Endothelial cell of umbilical vein (primary cell): ENCODE measurements at regions of chr9 and their contacts with region 1.

Region 1: DNA sequence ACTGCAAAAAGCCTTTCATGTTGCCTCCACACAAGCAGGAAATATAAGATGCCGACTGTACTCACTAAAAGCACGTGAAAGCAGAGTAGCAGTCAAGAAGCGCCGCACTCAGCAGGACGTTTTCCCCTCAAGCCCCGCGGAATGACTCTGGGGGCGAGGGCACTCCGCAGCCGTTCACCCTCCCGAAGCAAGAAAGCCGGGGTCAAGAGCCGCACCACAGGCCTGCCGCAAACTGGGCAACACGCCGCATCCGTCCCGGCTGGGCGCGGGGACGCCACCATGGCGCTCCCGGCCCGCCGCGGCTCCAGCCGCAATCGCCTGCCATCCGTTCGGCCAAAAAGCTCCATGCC is 364 bp downstream of the RPS6 start:
- DNase-seq: peak; percentile 69
- H3K4me3 ChIP-seq: peak overlapping the region; percentile 84 to 94 (median 93)
- H3K27ac ChIP-seq: peak overlapping the region; percentile 62
- H3K4me1 ChIP-seq: peaks cover 37% of the 10 kb centered on the region
- H3K27me3 ChIP-seq: no peaks in the 10 kb centered on the region
- CTCF ChIP-seq: no peak
- POLR2A ChIP-seq: no peak

Region 2: DNA sequence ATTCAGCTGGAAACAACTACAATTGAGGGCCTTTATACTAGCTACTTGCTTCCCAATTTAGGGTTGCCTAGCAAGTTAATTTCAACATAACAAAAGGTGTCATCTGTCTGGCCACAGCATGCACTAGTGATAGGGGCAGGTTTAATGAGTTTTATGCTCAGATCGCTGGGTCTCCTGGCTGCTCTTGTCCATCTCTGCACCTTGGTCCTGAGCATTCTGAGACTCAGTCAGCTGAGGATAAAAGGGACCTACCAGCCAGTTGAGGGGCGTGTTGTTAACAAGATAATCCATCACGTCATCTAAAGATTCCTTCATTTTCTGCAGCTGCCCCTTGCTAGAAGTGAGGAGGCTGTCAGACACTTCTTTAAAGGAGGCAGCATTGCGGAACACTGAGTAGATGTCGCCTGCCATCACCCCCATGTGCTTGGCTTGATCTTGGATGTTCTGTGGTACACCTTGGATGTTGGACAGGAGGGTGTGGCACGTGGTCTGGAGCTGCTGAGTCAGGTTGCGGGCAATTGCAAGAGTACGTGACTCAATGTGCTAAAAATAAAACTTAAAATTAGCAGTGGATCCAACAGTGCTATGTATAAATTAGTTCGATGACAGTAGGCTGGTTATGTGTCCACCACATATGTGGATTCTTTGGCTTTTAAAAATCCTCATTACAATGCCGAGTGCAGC is 263.4 kb before region 1 on chr9:
- CTCF ChIA-PET with region 1: no interaction called
- POLR2A ChIA-PET with region 1: no interaction called
- dilution Hi-C with region 1: no loop called
- intact Hi-C with region 1: loop called (anchors 5 kb)
- DNase-seq: no peak
- H3K4me3 ChIP-seq: no peak overlapping the region
- H3K27ac ChIP-seq: no peak overlapping the region
- H3K4me1 ChIP-seq: peaks cover 30% of the 10 kb centered on the region
- H3K27me3 ChIP-seq: no peaks in the 10 kb centered on the region
- CTCF ChIP-seq: no peak
- POLR2A ChIP-seq: no peak

Region 3: GRCh38 chr9:19424176-19424779 is 44.6 kb after region 1 on chr9:
- CTCF ChIA-PET with region 1: no interaction called
- POLR2A ChIA-PET with region 1: no interaction called
- dilution Hi-C with region 1: no loop called
- intact Hi-C with region 1: loop called (anchors 5 kb)
- DNase-seq: peak; percentile 75
- H3K4me3 ChIP-seq: no peak overlapping the region
- H3K27ac ChIP-seq: peak overlapping the region; percentile 39
- H3K4me1 ChIP-seq: peaks cover 20% of the 10 kb centered on the region
- H3K27me3 ChIP-seq: no peaks in the 10 kb centered on the region
- CTCF ChIP-seq: no peak
- POLR2A ChIP-seq: no peak